Thyroid gland (tissue), 4 donors: ENCODE measurements at regions of chr1 and their contacts with region 1.

Region 1: GRCh38 chr1:51192213-51192843 is 43.7 kb upstream of the RNF11 start:
- DNase-seq: peak; percentile 71 to 73
- H3K4me3 ChIP-seq: no peak overlapping the region
- H3K27ac ChIP-seq: no peak overlapping the region
- H3K4me1 ChIP-seq: no peaks in the 10 kb centered on the region
- H3K27me3 ChIP-seq: no peaks in the 10 kb centered on the region
- CTCF ChIP-seq: peak; percentile 48 to 92 (median 64)
- POLR2A ChIP-seq: no peak

Region 2: GRCh38 chr1:50774759-50775351 is 417.5 kb before region 1 on chr1:
- intact Hi-C with region 1: loop called (anchors 10 kb)
- DNase-seq: no peak
- H3K4me3 ChIP-seq: no peak overlapping the region
- H3K27ac ChIP-seq: no peak overlapping the region
- H3K4me1 ChIP-seq: no peaks in the 10 kb centered on the region
- H3K27me3 ChIP-seq: no peaks in the 10 kb centered on the region
- CTCF ChIP-seq: peak; percentile 47 to 74 (median 62)
- POLR2A ChIP-seq: no peak

Region 3: DNA sequence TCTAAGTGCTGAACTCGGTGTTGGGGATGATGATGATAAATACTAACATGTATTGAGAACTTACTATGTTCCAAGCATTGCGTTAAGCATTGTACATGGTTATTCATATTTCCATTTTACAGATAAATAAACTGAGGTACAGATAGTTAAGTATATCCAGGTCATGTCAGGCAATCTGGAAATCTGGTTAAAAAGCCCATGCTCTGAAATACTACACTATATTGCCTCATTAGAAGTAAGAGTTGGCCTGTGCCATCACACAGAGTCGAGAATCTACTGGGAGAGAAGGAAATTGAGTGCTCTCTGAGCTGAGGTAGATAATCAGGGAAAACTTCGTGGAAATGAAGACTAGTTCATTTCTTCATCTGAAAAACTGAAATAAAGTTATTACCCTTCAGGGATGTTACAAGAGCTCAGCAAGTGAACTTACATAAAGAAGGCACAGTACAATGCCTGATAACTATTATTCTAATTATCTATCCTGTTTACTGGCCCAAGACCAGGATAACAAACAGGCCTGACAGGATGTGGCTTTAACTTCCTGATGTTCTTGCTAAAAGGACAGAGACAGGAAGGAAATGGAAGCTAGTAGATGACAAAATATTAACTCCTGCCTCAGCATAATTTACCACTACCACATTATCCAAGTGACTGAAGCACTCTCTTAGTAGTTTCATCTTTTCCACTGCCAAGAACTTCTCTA is 241.1 kb after region 1 on chr1:
- intact Hi-C with region 1: no loop called
- DNase-seq: no peak
- H3K4me3 ChIP-seq: no peak overlapping the region
- H3K27ac ChIP-seq: peak overlapping the region in 2 of 3 donors; percentile 38 to 48
- H3K4me1 ChIP-seq: peaks cover 0 to 9% of the 10 kb centered on the region in 2 donors
- H3K27me3 ChIP-seq: no peaks in the 10 kb centered on the region
- CTCF ChIP-seq: no peak
- POLR2A ChIP-seq: no peak